ENCODE measurements at regions of chr16 and their contacts with region 1.

Region 1: GRCh38 chr16:1188432-1189189 is 35.7 kb downstream of the CACNA1H start:
- DNase-seq: peak in 8 of 9 donors; percentile 28 to 62 (median 50)
- ATAC-seq: peak; percentile 49
- H3K4me3 ChIP-seq: no peak overlapping the region
- H3K4me3 Mint-ChIP-seq: no peak overlapping the region
- H3K27ac ChIP-seq: no peak overlapping the region
- H3K27ac Mint-ChIP-seq: no peak overlapping the region
- H3K4me1 ChIP-seq: no peaks in the 10 kb centered on the region
- H3K4me1 Mint-ChIP-seq: no peaks in the 10 kb centered on the region
- H3K27me3 ChIP-seq: no peaks in the 10 kb centered on the region
- H3K27me3 Mint-ChIP-seq: peaks cover 0 to 10% (median 0%) of the 10 kb centered on the region in 5 donors

Region 2: GRCh38 chr16:700684-701584 is 487.7 kb before region 1 on chr16:
- CTCF ChIA-PET with region 1: no interaction called
- POLR2A ChIA-PET with region 1: no interaction called
- intact Hi-C with region 1: loop called in 1 of 2 experiments (anchors 5 kb)
- DNase-seq: peak in 7 of 9 donors; percentile 48 to 78 (median 62)
- ATAC-seq: peak; percentile 77
- H3K4me3 ChIP-seq: no peak overlapping the region
- H3K4me3 Mint-ChIP-seq: peak overlapping the region in 1 of 10 donors; percentile 28
- H3K27ac ChIP-seq: no peak overlapping the region
- H3K27ac Mint-ChIP-seq: no peak overlapping the region
- H3K4me1 ChIP-seq: peaks cover 23 to 24% of the 10 kb centered on the region in 2 donors
- H3K4me1 Mint-ChIP-seq: peaks cover 4 to 20% (median 9%) of the 10 kb centered on the region in 7 donors
- H3K27me3 ChIP-seq: peaks cover 0 to 13% of the 10 kb centered on the region in 2 donors
- H3K27me3 Mint-ChIP-seq: peaks cover 10 to 37% (median 12%) of the 10 kb centered on the region in 5 donors